ENCODE measurements at regions of chr2 and their contacts with region 1.

Region 1: DNA sequence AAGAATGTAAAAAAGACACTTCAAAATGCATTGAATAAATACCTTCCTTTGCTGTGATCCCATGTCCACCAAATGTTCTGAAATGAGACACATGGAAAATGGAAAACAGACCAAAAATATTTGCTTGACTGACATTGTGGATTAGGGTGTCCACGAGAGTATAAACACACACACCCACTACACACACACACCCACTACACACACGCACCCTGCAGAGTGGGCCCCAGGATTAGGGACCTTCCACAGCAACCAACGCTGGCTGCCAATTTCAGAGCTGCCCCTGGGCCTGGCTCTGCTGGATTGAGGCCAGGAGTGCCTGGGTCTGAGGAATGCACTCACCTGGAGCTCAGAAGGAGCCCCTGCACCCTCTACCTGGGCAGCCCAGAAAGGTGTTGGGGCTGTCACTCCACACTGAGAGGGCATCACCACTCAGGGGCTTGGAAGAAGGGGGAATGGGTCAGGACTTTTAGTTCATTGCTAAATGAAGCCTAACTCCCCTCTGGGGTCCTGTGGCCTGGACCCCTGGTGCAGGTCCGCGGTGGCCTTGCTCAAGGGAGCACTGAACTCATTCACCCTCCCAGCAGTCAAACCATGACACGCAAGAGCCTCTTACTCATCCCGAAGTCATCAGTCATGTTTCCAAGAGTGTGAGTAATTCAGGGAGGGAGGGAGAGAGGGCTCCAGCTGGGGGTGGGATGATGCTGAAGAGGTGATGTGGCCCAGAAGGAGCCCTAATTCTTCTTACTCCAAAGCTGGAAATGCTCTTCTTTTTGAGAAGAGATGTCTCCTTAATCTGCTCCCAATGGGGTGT is 50.2 kb upstream of the PLB1 start:
- DNase-seq: peak; percentile 87
- H3K4me3 Mint-ChIP-seq: peak overlapping the region; percentile 37
- H3K27ac Mint-ChIP-seq: peak overlapping the region; percentile 80
- H3K4me1 Mint-ChIP-seq: peaks cover 68% of the 10 kb centered on the region
- H3K27me3 Mint-ChIP-seq: no peaks in the 10 kb centered on the region

Region 2: DNA sequence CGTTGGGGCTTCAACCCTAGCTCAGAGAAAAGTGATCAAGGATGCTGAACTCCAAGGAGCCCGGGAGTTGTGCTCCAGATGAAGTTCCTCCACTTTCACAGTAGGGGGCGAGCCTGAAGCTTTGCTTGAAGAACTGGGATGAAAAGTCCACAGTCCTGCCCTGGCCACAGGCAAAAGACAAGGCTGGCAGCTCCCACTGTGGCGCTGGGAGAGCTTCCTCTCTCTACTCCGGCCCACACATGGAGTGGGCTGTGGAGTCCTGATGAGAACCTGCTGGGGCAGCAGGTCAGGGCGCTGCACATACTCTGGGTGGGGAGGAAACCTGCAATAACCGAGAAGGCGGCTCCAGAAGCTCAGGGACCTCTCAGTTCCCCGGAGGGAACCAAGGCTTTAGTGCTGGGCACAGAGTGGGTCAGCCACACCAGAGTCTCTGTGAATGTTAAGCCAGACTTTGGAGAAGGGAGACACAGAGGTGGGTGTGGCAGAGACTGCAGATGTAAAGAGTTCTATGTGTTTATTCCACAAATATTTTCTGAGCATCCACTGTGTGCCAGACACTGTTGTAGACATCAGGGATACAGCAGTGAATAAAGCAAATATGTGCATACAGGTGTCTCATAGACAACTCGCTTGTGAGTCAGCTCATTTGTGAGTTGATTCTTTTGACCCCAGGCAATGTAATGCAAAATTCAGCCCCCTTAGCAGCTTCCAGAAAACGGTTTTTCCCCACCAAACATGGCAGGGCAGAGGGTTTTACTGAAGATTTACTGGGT is 722.1 kb before region 1 on chr2:
- CTCF ChIA-PET with region 1: no interaction called
- intact Hi-C with region 1: loop called (anchors 1 kb)
- DNase-seq: peak; percentile 53
- H3K4me3 Mint-ChIP-seq: no peak overlapping the region
- H3K27ac Mint-ChIP-seq: no peak overlapping the region
- H3K4me1 Mint-ChIP-seq: peaks cover 24% of the 10 kb centered on the region
- H3K27me3 Mint-ChIP-seq: no peaks in the 10 kb centered on the region

Region 3: GRCh38 chr2:27954771-27955383 is 490.8 kb before region 1 on chr2:
- CTCF ChIA-PET with region 1: no interaction called
- intact Hi-C with region 1: loop called (anchors 5 kb)
- DNase-seq: peak; percentile 68
- H3K4me3 Mint-ChIP-seq: no peak overlapping the region
- H3K27ac Mint-ChIP-seq: peak overlapping the region; percentile 68
- H3K4me1 Mint-ChIP-seq: peaks cover 65% of the 10 kb centered on the region
- H3K27me3 Mint-ChIP-seq: no peaks in the 10 kb centered on the region

Region 4: DNA sequence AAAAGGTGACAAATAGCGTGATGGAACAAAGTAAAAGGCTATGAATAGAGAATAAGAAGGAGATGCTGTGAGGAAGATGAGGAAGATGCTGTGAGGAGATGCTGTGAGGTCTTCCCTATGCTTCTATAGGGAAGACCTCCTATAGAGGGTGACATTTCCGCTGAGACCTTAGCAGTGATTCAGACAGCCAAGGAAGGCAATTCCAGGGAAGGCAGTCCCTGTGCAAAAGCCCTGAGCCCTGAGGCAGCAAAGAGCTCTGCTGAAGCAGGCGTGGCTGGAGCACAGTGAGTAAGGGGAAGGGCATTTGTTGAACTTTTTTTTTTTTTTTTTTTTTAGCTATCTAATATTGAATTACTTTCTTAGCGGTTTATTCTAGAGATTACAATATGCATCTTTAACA is 195.6 kb before region 1 on chr2:
- CTCF ChIA-PET with region 1: no interaction called
- intact Hi-C with region 1: loop called (anchors 1 kb)
- DNase-seq: no peak
- H3K4me3 Mint-ChIP-seq: no peak overlapping the region
- H3K27ac Mint-ChIP-seq: no peak overlapping the region
- H3K4me1 Mint-ChIP-seq: peaks cover 28% of the 10 kb centered on the region
- H3K27me3 Mint-ChIP-seq: no peaks in the 10 kb centered on the region

Region 5: DNA sequence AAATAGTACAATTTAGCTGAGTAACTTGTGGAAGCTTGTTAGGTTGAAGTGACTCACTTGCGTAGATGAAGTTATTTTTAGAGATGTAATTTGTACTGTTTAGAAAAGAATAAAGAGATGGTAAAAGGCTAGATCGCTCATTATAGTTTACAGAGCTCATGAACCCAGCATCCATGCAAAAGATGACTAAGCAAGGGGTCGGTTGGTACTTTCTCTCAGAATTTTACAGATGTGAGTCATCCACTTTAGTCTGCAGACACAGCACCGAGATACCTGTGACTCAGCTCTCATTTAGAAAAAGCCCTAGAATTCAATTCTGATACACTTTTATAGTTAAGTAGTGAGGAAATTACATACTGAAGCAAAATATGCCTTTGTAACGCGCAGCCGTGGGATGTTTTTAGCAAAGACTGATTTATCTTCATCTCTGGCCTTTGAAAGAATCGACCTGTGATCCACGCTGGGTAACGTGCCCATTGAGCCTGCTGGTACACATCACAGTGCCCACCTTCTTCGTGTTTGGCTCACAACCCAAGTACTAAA is 169.5 kb before region 1 on chr2:
- CTCF ChIA-PET with region 1: no interaction called
- intact Hi-C with region 1: loop called (anchors 5 kb)
- DNase-seq: peak; percentile 56
- H3K4me3 Mint-ChIP-seq: no peak overlapping the region
- H3K27ac Mint-ChIP-seq: peak overlapping the region; percentile 38
- H3K4me1 Mint-ChIP-seq: peaks cover 35% of the 10 kb centered on the region
- H3K27me3 Mint-ChIP-seq: no peaks in the 10 kb centered on the region

Region 6: GRCh38 chr2:28406276-28407096 is 39.2 kb before region 1 on chr2:
- CTCF ChIA-PET with region 1: interaction called, 6 read pairs
- intact Hi-C with region 1: loop called (anchors 1 kb)
- DNase-seq: peak; percentile 50
- H3K4me3 Mint-ChIP-seq: no peak overlapping the region
- H3K27ac Mint-ChIP-seq: peak overlapping the region; percentile 32
- H3K4me1 Mint-ChIP-seq: peaks cover 74% of the 10 kb centered on the region
- H3K27me3 Mint-ChIP-seq: no peaks in the 10 kb centered on the region

Region 7: DNA sequence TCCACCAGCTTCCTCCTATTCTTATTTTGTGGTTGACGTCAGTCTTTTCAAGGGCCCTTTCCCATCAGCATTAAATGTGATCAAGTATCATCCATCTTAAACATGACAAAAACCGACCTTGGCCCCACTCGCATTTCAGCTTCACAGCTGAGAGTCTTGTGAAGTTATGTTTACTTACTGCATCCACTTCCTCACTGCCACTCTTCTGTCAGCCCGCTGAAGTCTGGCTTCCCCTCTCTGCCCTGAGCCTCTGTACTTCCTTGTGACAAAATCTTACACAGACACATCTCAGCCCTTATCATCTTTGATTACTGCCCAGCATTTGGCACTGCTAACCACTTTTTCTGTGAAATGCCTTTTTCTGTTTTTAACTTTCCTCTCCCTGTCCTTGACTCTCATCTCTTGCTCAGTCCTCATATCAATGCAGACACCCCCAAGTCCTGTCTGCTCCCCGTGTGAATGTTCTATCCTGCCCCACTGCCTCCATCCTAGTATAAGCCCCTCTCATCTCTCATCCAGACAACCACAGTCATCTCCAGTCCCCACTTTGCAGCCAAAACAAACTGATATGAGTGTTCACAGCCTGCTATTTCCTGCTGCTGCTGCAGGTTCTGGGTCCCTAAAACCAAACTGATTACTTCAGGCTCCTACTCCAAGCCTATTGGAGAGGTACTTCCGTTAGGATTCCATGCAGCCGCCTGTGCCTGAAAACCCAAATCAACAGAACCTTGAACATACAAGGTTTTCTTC is 21.6 kb before region 1 on chr2:
- CTCF ChIA-PET with region 1: interaction called, 6 read pairs
- intact Hi-C with region 1: loop called (anchors 1 kb)
- DNase-seq: peak; percentile 65
- H3K4me3 Mint-ChIP-seq: peak overlapping the region; percentile 9
- H3K27ac Mint-ChIP-seq: peak overlapping the region; percentile 82
- H3K4me1 Mint-ChIP-seq: peaks cover 37% of the 10 kb centered on the region
- H3K27me3 Mint-ChIP-seq: no peaks in the 10 kb centered on the region

Measured in activated naive CD4-positive, alpha-beta T cell treated with anti-CD3 and anti-CD28 coated beads for 36 hours (primary cell).